Caco-2 (cell line): ENCODE measurements at regions of chr5 and their contacts with region 1.

Region 1: GRCh38 chr5:32916648-32917047 is 205.5 kb downstream of the NPR3 start:
- DNase-seq: peak in 1 of 2 experiments; percentile 19
- H3K4me3 ChIP-seq: no peak overlapping the region
- H3K4me3 Mint-ChIP-seq: no peak overlapping the region
- H3K27ac Mint-ChIP-seq: no peak overlapping the region
- H3K4me1 ChIP-seq: no peaks in the 10 kb centered on the region
- H3K4me1 Mint-ChIP-seq: no peaks in the 10 kb centered on the region
- H3K27me3 ChIP-seq: no peaks in the 10 kb centered on the region
- H3K27me3 Mint-ChIP-seq: no peaks in the 10 kb centered on the region
- CTCF ChIP-seq: peak; percentile 14 to 55

Region 2: GRCh38 chr5:32628048-32628803 is 288.4 kb before region 1 on chr5:
- CTCF ChIA-PET with region 1: no interaction called
- POLR2A ChIA-PET with region 1: no interaction called
- intact Hi-C with region 1: loop called (anchors 5 kb)
- DNase-seq: peak in 1 of 2 experiments; percentile 30
- H3K4me3 ChIP-seq: no peak overlapping the region
- H3K4me3 Mint-ChIP-seq: no peak overlapping the region
- H3K27ac Mint-ChIP-seq: no peak overlapping the region
- H3K4me1 ChIP-seq: no peaks in the 10 kb centered on the region
- H3K4me1 Mint-ChIP-seq: no peaks in the 10 kb centered on the region
- H3K27me3 ChIP-seq: no peaks in the 10 kb centered on the region
- H3K27me3 Mint-ChIP-seq: no peaks in the 10 kb centered on the region
- CTCF ChIP-seq: peak in 1 of 2 experiments; percentile 34

Region 3: DNA sequence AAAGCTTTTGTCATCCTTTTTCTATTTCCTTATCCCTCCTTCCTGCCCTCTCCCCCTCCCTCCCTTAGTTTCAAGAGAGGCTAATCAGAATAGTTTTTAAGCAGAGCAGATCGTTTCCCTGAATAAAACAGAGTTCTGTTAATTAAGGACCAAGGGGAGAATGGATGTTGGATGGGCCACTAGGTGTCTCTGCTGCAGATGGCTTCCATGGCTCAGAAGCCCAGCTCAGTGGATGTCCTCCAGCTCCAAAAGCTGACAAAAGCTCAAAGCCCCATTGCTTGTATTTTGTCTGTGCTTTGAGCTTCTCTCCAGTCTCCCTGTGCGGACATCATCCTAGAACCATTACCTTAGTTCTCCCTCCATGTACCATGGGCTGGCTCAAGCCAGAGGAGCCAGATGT is 226.5 kb before region 1 on chr5:
- CTCF ChIA-PET with region 1: interaction called, 4 read pairs
- POLR2A ChIA-PET with region 1: no interaction called
- intact Hi-C with region 1: loop called (anchors 1 kb)
- DNase-seq: peak in 1 of 2 experiments; percentile 13
- H3K4me3 ChIP-seq: no peak overlapping the region
- H3K4me3 Mint-ChIP-seq: no peak overlapping the region
- H3K27ac Mint-ChIP-seq: no peak overlapping the region
- H3K4me1 ChIP-seq: no peaks in the 10 kb centered on the region
- H3K4me1 Mint-ChIP-seq: peaks cover 5% of the 10 kb centered on the region
- H3K27me3 ChIP-seq: no peaks in the 10 kb centered on the region
- H3K27me3 Mint-ChIP-seq: peaks cover 12% of the 10 kb centered on the region
- CTCF ChIP-seq: peak; percentile 21 to 44

Region 4: GRCh38 chr5:32794086-32794485 is 122.6 kb before region 1 on chr5:
- CTCF ChIA-PET with region 1: no interaction called
- POLR2A ChIA-PET with region 1: no interaction called
- intact Hi-C with region 1: no loop called
- DNase-seq: peak in 1 of 2 experiments; percentile 9
- H3K4me3 ChIP-seq: no peak overlapping the region
- H3K4me3 Mint-ChIP-seq: no peak overlapping the region
- H3K27ac Mint-ChIP-seq: no peak overlapping the region
- H3K4me1 ChIP-seq: no peaks in the 10 kb centered on the region
- H3K4me1 Mint-ChIP-seq: no peaks in the 10 kb centered on the region
- H3K27me3 ChIP-seq: no peaks in the 10 kb centered on the region; the same call in 1 of the 2 replicates
- H3K27me3 Mint-ChIP-seq: peaks cover 7% of the 10 kb centered on the region
- CTCF ChIP-seq: no peak

Region 5: GRCh38 chr5:32852535-32852934 is 64.1 kb before region 1 on chr5:
- CTCF ChIA-PET with region 1: no interaction called
- POLR2A ChIA-PET with region 1: no interaction called
- intact Hi-C with region 1: no loop called
- DNase-seq: peak; percentile 2 to 39
- H3K4me3 ChIP-seq: no peak overlapping the region
- H3K4me3 Mint-ChIP-seq: no peak overlapping the region
- H3K27ac Mint-ChIP-seq: no peak overlapping the region
- H3K4me1 ChIP-seq: no peaks in the 10 kb centered on the region
- H3K4me1 Mint-ChIP-seq: no peaks in the 10 kb centered on the region
- H3K27me3 ChIP-seq: no peaks in the 10 kb centered on the region; the same call in 1 of the 2 replicates
- H3K27me3 Mint-ChIP-seq: peaks cover 14% of the 10 kb centered on the region
- CTCF ChIP-seq: peak in 1 of 2 experiments; percentile 12